PC-9 (cell line): ENCODE measurements at regions of chr10 and their contacts with region 1.

Region 1: DNA sequence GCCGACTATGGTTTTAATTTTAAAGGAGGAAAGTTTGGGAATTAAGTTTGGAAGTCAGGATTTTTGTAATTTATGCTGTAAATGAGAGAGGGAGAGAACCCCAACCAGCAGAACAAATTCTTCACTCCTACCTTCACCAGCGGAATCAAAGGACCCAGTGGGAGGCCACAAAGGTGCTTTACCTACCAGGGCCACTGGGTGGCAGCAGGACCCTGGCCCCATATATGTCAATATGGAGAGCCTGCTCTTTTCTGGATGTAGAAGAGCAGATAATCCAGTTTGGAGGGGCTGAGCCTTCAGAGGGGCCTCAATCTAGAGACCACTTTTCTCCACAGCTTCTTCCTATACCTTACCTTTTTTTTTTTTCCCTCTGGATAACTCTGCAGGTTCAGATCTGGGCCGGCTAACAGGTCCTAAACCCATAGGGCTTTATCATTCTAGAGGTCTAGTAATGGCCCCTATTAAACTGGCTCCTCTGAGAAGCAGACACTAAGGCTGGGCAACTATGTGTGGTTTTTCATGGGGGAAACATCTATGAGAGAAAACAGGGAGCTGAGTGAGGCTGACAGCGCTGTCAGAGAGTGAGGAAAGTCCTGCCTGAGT is 8.5 kb upstream of the SCD start:
- DNase-seq: peak in 1 of 2 experiments; percentile 66
- H3K4me3 ChIP-seq: no peak overlapping the region
- H3K27ac ChIP-seq: no peak overlapping the region
- H3K4me1 ChIP-seq: 0 out of 2 replicates have a peak, but pooled peaks cover 7% of the 10 kb centered on the region
- H3K27me3 ChIP-seq: peaks cover 19% of the 10 kb centered on the region
- CTCF ChIP-seq: peak; percentile 84

Region 2: DNA sequence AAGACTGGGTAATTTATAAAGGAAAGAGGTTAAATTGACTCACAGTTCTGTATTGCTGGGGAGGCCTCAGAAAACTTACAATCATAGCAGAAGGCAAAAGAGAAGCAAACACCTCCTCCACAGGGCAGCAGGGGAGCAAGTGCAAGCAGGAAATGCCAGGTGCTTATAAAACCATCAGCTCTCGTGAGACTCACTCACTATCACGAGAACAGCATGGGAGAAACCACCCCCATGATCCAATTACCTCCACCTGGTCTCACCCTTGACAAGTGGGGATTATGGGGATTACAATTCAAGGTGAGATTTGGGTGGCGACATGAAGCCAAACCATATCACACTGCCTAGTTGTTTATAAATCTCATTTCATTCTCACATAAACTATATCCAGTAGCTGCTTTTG is 228.9 kb before region 1 on chr10:
- CTCF ChIA-PET with region 1: interaction called, 15 read pairs
- POLR2A ChIA-PET with region 1: no interaction called
- intact Hi-C with region 1: no loop called
- DNase-seq: no peak
- H3K4me3 ChIP-seq: no peak overlapping the region
- H3K27ac ChIP-seq: no peak overlapping the region
- H3K4me1 ChIP-seq: no peaks in the 10 kb centered on the region
- H3K27me3 ChIP-seq: no peaks in the 10 kb centered on the region
- CTCF ChIP-seq: no peak

Region 3: DNA sequence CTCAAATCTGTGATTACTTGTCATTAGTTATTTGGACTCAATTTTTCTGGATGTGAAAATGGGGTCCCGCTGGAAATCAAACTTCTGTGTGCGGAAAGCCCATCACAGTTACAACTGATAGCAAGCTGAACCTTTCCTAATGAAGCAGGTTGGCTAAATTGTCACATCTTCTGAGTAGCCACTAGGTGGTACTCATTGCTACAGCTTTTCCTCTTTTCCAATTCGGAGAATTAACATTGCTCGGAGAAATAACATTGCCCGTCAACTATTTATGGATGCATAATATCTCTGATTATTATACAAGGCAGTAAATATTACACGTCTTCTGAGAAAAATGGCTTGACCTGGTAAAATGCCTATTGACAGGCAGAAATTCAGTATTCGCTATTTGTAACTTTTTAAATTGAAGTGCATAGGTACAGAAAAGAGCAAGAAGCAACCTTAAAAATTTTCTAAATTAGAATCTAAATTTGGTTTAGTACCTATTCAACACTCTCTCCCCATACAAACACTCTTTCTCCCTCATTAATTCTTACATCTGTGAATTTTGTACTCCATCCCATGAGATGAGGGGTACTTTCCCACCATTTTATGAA is 34.7 kb before region 1 on chr10:
- CTCF ChIA-PET with region 1: no interaction called
- POLR2A ChIA-PET with region 1: no interaction called
- intact Hi-C with region 1: loop called (anchors 1 kb)
- DNase-seq: peak in 1 of 2 experiments; percentile 37
- H3K4me3 ChIP-seq: no peak overlapping the region
- H3K27ac ChIP-seq: no peak overlapping the region
- H3K4me1 ChIP-seq: no peaks in the 10 kb centered on the region; the same call in 1 of the 2 replicates
- H3K27me3 ChIP-seq: no peaks in the 10 kb centered on the region
- CTCF ChIP-seq: peak; percentile 64

Region 4: GRCh38 chr10:100311307-100311706 is 27.2 kb before region 1 on chr10:
- CTCF ChIA-PET with region 1: interaction called, 12 read pairs
- POLR2A ChIA-PET with region 1: no interaction called
- intact Hi-C with region 1: no loop called
- DNase-seq: no peak
- H3K4me3 ChIP-seq: no peak overlapping the region
- H3K27ac ChIP-seq: no peak overlapping the region
- H3K4me1 ChIP-seq: no peaks in the 10 kb centered on the region; the same call in 1 of the 2 replicates
- H3K27me3 ChIP-seq: peaks cover 40% of the 10 kb centered on the region
- CTCF ChIP-seq: no peak

Region 5: GRCh38 chr10:100508691-100509150 is 170.2 kb after region 1 on chr10:
- CTCF ChIA-PET with region 1: no interaction called
- POLR2A ChIA-PET with region 1: no interaction called
- intact Hi-C with region 1: loop called (anchors 2 kb)
- DNase-seq: peak in 1 of 2 experiments; percentile 5
- H3K4me3 ChIP-seq: no peak overlapping the region
- H3K27ac ChIP-seq: no peak overlapping the region
- H3K4me1 ChIP-seq: peaks cover 16% of the 10 kb centered on the region
- H3K27me3 ChIP-seq: no peaks in the 10 kb centered on the region
- CTCF ChIP-seq: peak; percentile 73